ENCODE measurements at regions of chr7 and their contacts with region 1.

Region 1: DNA sequence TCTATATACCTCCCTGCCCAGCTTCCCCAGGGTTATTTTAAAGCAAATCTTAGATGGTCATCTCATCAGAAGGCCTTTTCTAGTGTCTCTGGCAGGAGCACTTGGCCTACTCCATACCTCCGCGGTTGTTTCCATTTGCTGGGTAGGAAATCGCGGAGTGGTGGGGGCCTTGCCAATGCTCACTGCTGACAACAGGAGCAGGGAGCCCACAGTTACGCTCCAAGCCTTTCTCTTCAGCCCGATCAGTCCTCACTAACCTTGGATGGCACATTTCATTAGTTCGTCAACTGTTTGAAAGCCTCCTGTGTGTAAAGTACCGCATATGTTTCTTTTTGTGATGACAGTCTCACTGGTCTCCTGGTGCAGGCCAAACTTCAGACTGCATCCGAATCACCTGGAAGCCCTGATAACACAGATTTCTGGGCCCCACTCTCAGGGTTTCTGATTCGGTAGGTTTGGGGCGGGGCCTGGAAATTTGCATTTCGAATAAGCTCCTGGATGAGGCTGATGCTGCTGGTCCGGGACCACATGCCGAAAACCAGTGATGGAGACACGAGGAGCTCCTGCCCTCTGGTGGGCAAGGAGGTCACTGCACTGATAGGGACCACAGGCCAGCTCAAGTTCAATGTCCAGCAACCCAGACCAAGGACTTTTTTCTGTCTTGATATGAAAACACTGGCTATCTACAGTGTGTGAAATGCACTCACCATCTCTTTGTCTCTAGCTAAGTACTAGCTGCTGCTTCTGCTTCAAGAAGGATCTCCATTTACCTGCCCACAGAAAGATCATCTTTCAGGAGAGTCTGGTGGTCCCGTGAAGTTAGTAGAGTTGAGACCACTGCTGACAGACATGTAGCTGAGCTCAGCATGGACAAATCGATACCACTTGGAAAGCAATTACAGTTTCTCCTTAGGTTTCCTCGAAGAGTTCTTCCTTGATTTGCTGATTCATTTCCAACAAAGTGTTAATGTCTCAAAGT is 14.0 kb downstream of the LRGUK start:
- DNase-seq: no peak
- ATAC-seq: peak; percentile 96
- H3K4me3 ChIP-seq: no peak overlapping the region
- H3K27ac ChIP-seq: no peak overlapping the region
- H3K4me1 ChIP-seq: no peaks in the 10 kb centered on the region
- H3K27me3 ChIP-seq: no peaks in the 10 kb centered on the region; a peak in 1 of 4 replicates
- CTCF ChIP-seq: peak; percentile 83 to 91 (median 88)
- EP300 ChIP-seq: no peak
- POLR2A ChIP-seq: no peak
- RAD21 ChIP-seq: peak; percentile 81

Region 2: DNA sequence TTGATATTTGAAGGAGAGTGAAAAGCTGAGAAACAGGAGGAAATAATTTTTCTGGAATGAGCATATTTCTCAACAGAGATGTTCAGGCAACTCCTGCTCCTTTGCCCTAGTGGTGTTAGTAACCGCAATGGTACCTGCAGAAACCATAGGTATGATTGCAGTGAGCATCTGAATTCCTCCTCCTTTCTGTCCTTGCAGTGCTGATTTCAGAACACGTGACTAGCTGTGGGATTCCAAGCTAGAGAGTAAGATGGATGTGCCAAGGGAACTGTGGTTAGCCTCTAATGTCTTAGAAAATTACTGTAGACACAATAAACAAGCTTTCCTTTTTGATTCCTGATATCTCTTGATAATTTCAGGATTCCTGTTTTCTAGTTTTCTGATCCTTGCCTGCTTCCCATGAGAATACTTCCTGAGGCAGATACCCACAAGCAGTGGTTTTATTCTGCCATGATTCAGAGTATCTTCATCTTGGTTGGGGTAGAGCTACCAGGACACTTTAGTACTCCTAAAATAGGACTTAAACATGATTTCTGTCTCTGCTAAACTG is 13.5 kb after region 1 on chr7:
- CTCF ChIA-PET with region 1: interaction called, 24 read pairs
- POLR2A ChIA-PET with region 1: no interaction called
- RAD21 ChIA-PET with region 1: no interaction called
- SMC1A ChIA-PET with region 1: interaction called, 3 read pairs
- in situ Hi-C with region 1: no loop called
- intact Hi-C with region 1: no loop called
- DNase-seq: no peak
- ATAC-seq: no peak
- H3K4me3 ChIP-seq: no peak overlapping the region
- H3K27ac ChIP-seq: no peak overlapping the region
- H3K4me1 ChIP-seq: peaks cover 7% of the 10 kb centered on the region; the same call in 1 of the 2 replicates
- H3K27me3 ChIP-seq: no peaks in the 10 kb centered on the region
- CTCF ChIP-seq: no peak
- EP300 ChIP-seq: no peak
- POLR2A ChIP-seq: no peak
- RAD21 ChIP-seq: no peak

Region 3: GRCh38 chr7:134355927-134356326 is 214.7 kb after region 1 on chr7:
- CTCF ChIA-PET with region 1: interaction called, 13 read pairs
- POLR2A ChIA-PET with region 1: no interaction called
- RAD21 ChIA-PET with region 1: interaction called, 7 read pairs
- SMC1A ChIA-PET with region 1: interaction called, 3 read pairs
- in situ Hi-C with region 1: no loop called
- intact Hi-C with region 1: loop called (anchors 10 kb)
- DNase-seq: no peak
- ATAC-seq: no peak
- H3K4me3 ChIP-seq: no peak overlapping the region
- H3K27ac ChIP-seq: no peak overlapping the region
- H3K4me1 ChIP-seq: no peaks in the 10 kb centered on the region
- H3K27me3 ChIP-seq: no peaks in the 10 kb centered on the region; a peak in 1 of 4 replicates
- CTCF ChIP-seq: no peak
- EP300 ChIP-seq: no peak
- POLR2A ChIP-seq: no peak
- RAD21 ChIP-seq: no peak

Measured in GM12878 (cell line).